ENCODE measurements at regions of chrX and their contacts with region 1.

Region 1: DNA sequence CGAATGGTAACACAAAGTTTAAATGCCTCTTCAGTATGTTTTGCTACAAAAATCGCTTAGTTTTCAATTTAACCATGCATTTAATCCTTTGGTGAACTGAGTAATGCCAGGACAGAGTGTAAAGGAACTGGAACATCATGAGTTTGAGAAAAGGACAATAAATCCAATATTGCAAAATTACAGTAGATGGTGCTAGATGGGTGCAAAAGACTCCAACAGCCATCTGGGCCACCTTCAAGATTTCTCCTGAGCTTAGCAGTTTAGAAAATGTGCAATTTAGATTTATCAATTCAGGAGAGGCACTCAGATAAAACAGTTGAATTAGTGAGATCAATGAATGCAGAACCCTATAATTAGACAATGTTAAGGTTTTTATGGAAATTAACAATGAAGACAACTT is 33.2 kb upstream of the MID1IP1 start:
- DNase-seq: no peak
- ATAC-seq: no peak
- H3K4me3 Mint-ChIP-seq: no peak overlapping the region
- H3K27ac Mint-ChIP-seq: no peak overlapping the region
- H3K4me1 Mint-ChIP-seq: no peaks in the 10 kb centered on the region
- H3K27me3 Mint-ChIP-seq: no peaks in the 10 kb centered on the region

Region 2: GRCh38 chrX:38985375-38985774 is 217.3 kb after region 1 on chrX:
- CTCF ChIA-PET with region 1: interaction called, 6 read pairs
- POLR2A ChIA-PET with region 1: no interaction called
- intact Hi-C with region 1: loop called (anchors 1 to 5 kb)
- DNase-seq: peak; percentile 7
- ATAC-seq: peak; percentile 65
- H3K4me3 Mint-ChIP-seq: no peak overlapping the region
- H3K27ac Mint-ChIP-seq: no peak overlapping the region
- H3K4me1 Mint-ChIP-seq: no peaks in the 10 kb centered on the region
- H3K27me3 Mint-ChIP-seq: no peaks in the 10 kb centered on the region

Region 3: GRCh38 chrX:39149761-39150160 is 381.7 kb after region 1 on chrX:
- CTCF ChIA-PET with region 1: interaction called, 3 read pairs
- POLR2A ChIA-PET with region 1: no interaction called
- intact Hi-C with region 1: loop called in 1 of 2 experiments (anchors 5 kb)
- DNase-seq: peak; percentile 81
- ATAC-seq: no peak
- H3K4me3 Mint-ChIP-seq: no peak overlapping the region
- H3K27ac Mint-ChIP-seq: no peak overlapping the region
- H3K4me1 Mint-ChIP-seq: no peaks in the 10 kb centered on the region
- H3K27me3 Mint-ChIP-seq: no peaks in the 10 kb centered on the region

Region 4: DNA sequence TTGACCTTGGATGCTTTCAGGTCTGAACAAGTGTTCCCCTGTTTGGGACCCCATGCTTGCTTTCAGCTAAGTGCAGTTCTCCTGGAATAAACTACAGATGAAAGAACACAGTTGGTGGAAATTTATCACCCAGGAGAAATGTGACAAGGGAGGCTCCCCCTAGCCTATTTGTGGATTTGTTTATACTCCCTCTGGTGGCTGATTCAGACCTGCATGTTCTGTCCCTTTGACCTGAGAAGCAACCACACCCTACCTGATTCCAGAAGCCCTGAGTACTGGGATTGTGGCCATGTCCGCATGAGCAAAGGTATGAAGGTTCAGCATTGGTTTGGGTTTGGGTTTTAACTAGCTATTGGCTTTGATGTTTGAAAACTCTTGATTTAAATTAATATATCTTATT is 474.1 kb after region 1 on chrX:
- CTCF ChIA-PET with region 1: no interaction called
- POLR2A ChIA-PET with region 1: no interaction called
- intact Hi-C with region 1: loop called in 1 of 2 experiments (anchors 10 kb)
- DNase-seq: peak; percentile 13
- ATAC-seq: no peak
- H3K4me3 Mint-ChIP-seq: no peak overlapping the region
- H3K27ac Mint-ChIP-seq: no peak overlapping the region
- H3K4me1 Mint-ChIP-seq: peaks cover 29% of the 10 kb centered on the region
- H3K27me3 Mint-ChIP-seq: no peaks in the 10 kb centered on the region